Uterus (tissue), 4 donors: ENCODE measurements at regions of chr4 and their contacts with region 1.

Region 1: GRCh38 chr4:57865264-57865663 is 755.1 kb upstream of the IGFBP7 start:
- DNase-seq: no peak
- H3K4me3 ChIP-seq: no peak overlapping the region
- H3K27ac ChIP-seq: no peak overlapping the region
- H3K4me1 ChIP-seq: no peaks in the 10 kb centered on the region
- H3K27me3 ChIP-seq: no peaks in the 10 kb centered on the region
- CTCF ChIP-seq: no peak
- POLR2A ChIP-seq: no peak

Region 2: GRCh38 chr4:57168982-57169381 is 696.3 kb before region 1 on chr4:
- intact Hi-C with region 1: no loop called
- DNase-seq: no peak
- H3K4me3 ChIP-seq: no peak overlapping the region
- H3K27ac ChIP-seq: no peak overlapping the region
- H3K4me1 ChIP-seq: no peaks in the 10 kb centered on the region
- H3K27me3 ChIP-seq: no peaks in the 10 kb centered on the region
- CTCF ChIP-seq: no peak
- POLR2A ChIP-seq: no peak

Region 3: GRCh38 chr4:57726154-57726553 is 139.1 kb before region 1 on chr4:
- intact Hi-C with region 1: loop called (anchors 5 kb)
- DNase-seq: no peak
- H3K4me3 ChIP-seq: no peak overlapping the region
- H3K27ac ChIP-seq: no peak overlapping the region
- H3K4me1 ChIP-seq: no peaks in the 10 kb centered on the region
- H3K27me3 ChIP-seq: no peaks in the 10 kb centered on the region
- CTCF ChIP-seq: no peak
- POLR2A ChIP-seq: no peak

Region 4: GRCh38 chr4:57774171-57774570 is 91.1 kb before region 1 on chr4:
- intact Hi-C with region 1: no loop called
- DNase-seq: no peak
- H3K4me3 ChIP-seq: no peak overlapping the region
- H3K27ac ChIP-seq: no peak overlapping the region
- H3K4me1 ChIP-seq: no peaks in the 10 kb centered on the region
- H3K27me3 ChIP-seq: no peaks in the 10 kb centered on the region
- CTCF ChIP-seq: no peak
- POLR2A ChIP-seq: no peak